ENCODE measurements at regions of chr4 and their contacts with region 1.

Region 1: DNA sequence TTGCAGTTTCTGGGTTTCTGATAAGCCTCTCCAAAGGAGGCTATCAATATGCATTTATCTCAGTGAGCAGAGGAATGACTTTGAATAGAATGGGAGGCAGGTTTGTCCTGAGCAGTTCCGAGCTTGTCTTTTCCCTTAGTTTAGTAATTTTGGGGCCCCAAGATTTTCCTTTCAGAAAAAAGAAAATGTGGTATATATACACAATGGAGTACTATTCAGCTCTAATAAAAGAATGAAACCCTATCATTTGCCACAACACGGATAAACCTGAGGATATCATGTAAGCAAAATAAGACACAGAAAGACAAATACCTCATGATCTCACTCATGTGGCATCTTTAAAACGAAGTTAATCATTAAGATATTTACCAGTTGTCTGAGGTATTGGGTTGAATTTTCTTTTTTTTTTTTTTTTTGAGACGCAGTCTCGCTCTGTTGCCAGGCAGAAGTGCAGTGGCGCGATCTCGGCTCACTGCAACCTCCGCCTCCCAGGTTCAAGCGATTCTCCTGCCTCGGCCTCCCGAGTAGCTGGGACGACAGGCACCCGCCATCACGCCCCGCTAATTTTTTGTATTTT is 540 bp downstream of the ZNF721 start:
- DNase-seq: no peak
- H3K4me3 ChIP-seq: peak overlapping the region; percentile 89
- H3K27ac ChIP-seq: peak overlapping the region; percentile 85
- H3K4me1 ChIP-seq: no peaks in the 10 kb centered on the region
- H3K27me3 ChIP-seq: no peaks in the 10 kb centered on the region
- CTCF ChIP-seq: no peak

Region 2: GRCh38 chr4:242121-242848 is 256.1 kb before region 1 on chr4:
- CTCF ChIA-PET with region 1: interaction called, 11 read pairs
- POLR2A ChIA-PET with region 1: no interaction called
- intact Hi-C with region 1: no loop called
- DNase-seq: peak; percentile 85
- H3K4me3 ChIP-seq: peak overlapping the region; percentile 16
- H3K27ac ChIP-seq: no peak overlapping the region
- H3K4me1 ChIP-seq: no peaks in the 10 kb centered on the region
- H3K27me3 ChIP-seq: no peaks in the 10 kb centered on the region
- CTCF ChIP-seq: peak; percentile 77

Region 3: DNA sequence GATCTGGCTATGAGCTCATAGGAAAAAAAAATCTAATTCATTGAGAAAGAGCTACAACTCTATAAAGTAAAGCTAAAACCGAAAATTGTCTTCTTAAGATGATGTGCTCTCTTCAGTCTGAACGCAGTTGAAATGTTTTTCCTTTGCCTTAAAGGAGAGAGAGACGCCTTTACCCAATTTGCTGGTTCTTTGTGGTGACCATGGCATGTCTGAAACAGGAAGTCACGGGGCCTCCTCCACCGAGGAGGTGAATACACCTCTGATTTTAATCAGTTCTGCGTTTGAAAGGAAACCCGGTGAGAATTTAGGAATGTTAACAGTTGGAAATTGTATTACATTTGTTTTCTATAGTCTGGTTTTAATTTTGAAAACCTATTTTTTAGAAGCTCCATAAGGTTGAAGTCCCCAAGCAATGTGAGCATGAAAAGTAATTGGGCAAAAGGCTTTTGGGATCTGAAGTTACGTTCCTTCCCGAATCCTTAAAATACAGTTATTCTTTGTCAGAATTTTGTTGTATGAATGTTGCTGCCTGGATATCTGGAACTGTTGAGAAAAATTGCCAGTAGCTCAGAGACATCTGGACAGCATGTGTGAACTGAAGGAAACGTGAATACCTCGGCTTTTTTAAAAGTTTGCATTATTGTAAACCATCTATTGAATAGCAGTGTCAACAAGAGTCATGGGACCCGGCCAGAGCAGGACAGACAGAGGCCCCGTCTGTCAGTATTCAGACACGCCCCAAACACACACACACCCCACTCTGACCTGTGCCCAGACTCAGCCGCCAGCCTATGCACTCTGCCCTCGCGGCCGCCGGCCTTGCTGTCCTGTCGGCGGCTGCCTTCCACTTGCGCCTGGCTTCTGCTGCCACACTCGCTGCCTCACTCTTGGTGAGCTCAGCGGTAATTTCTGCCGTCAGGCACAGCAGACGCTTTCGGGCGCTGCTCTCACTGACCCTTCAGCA is 10.5 kb after region 1 on chr4:
- CTCF ChIA-PET with region 1: interaction called, 10 read pairs
- POLR2A ChIA-PET with region 1: no interaction called
- intact Hi-C with region 1: no loop called
- DNase-seq: no peak
- H3K4me3 ChIP-seq: no peak overlapping the region
- H3K27ac ChIP-seq: no peak overlapping the region
- H3K4me1 ChIP-seq: no peaks in the 10 kb centered on the region
- H3K27me3 ChIP-seq: no peaks in the 10 kb centered on the region
- CTCF ChIP-seq: no peak

Region 4: DNA sequence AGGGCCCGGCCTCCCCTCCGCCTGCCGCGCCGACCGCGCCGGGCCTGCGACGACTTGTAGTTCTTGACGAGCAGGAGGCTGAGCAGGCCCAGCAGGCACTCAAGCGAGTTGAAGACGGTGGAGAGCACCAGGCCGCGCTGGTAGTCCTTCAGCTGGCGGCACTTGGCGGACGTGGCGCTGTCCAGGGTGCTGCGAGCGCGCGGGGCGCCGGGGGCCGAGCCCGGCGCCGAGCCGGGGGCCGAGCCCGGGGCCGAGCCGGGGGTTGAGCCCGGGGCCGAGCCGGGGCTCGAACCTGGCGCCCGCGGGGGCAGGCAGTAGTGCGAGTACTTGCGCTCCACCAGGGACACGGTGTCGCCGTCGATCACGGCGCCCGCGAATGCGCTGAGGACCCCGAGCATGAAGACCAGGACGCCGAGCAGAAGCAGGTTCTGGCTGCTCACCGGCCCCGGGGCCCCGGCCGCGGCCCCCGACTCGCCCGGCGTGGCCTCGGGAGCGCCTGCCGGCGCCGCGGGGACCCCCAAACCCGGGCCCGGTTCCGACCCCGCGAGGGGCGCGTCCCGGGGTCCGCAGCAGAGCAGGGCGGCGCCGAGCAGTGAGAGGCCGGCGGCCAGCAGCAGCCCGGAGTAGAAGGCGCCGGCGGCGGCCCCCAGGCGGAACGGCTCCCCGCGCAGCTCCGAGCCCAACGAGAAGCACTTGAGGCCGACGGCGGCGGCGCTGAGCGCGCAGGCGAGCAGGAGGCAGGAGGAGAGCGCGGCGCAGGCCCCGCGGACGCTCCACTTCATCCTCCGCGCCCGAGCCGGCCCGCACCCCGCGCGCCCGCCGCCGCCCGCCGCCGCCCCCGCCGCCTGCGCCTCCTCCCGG is 77.1 kb after region 1 on chr4:
- CTCF ChIA-PET with region 1: no interaction called
- POLR2A ChIA-PET with region 1: no interaction called
- intact Hi-C with region 1: no loop called
- DNase-seq: peak; percentile 71
- H3K4me3 ChIP-seq: peak overlapping the region; percentile 51
- H3K27ac ChIP-seq: peak overlapping the region; percentile 57
- H3K4me1 ChIP-seq: peaks cover 16% of the 10 kb centered on the region
- H3K27me3 ChIP-seq: peaks cover 28% of the 10 kb centered on the region
- CTCF ChIP-seq: no peak

Region 5: GRCh38 chr4:768995-769394 is 270.6 kb after region 1 on chr4:
- CTCF ChIA-PET with region 1: no interaction called
- POLR2A ChIA-PET with region 1: no interaction called
- intact Hi-C with region 1: no loop called
- DNase-seq: no peak
- H3K4me3 ChIP-seq: no peak overlapping the region
- H3K27ac ChIP-seq: no peak overlapping the region
- H3K4me1 ChIP-seq: peaks cover 5% of the 10 kb centered on the region
- H3K27me3 ChIP-seq: no peaks in the 10 kb centered on the region
- CTCF ChIP-seq: no peak

Measured in A673 (cell line).